ENCODE measurements at regions of chr5 and their contacts with region 1.

Region 1: DNA sequence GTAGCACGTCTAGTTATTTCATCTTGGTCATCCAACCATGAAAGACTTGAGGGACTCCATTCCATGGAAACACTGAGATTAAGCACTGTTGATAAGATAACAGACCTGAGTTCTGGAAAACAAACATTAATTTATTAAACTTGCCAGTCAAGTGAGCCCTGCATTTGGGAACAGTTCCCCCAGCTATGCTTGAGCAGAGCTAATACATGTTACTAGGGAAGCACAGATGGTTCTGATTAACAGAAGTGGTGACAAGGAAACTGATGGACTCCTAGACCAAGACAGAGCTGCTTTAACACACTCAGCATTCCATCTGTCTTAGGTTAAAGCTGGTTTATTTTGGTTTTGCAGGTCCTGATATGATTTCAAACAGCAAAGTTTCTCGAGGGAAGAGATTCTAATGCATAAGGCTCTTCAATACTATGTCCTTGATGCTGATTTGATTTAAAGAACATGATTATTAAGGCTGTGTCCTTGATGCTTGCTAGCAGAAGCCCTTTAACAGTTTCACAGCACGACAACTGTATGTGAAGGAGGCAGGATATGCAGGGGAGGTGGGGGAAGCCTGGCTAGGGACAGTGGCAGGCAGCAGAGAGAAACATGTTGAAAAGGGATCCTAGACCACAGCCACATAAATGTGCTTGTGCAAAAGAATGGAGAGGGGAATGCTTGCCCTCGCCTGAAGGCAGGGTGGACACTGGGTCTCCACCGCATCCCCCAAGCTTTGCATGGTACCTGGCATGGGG is 66.2 kb downstream of the ACTBL2 start:
- DNase-seq: no peak
- H3K4me3 Mint-ChIP-seq: no peak overlapping the region
- H3K27ac Mint-ChIP-seq: no peak overlapping the region
- H3K4me1 Mint-ChIP-seq: no peaks in the 10 kb centered on the region
- H3K27me3 Mint-ChIP-seq: peaks cover 8% of the 10 kb centered on the region

Region 2: GRCh38 chr5:57094753-57095683 is 321.4 kb before region 1 on chr5:
- intact Hi-C with region 1: no loop called
- DNase-seq: no peak
- H3K4me3 Mint-ChIP-seq: no peak overlapping the region
- H3K27ac Mint-ChIP-seq: no peak overlapping the region
- H3K4me1 Mint-ChIP-seq: no peaks in the 10 kb centered on the region
- H3K27me3 Mint-ChIP-seq: peaks cover 12% of the 10 kb centered on the region

Region 3: GRCh38 chr5:57394421-57395210 is 21.8 kb before region 1 on chr5:
- intact Hi-C with region 1: loop called (anchors 2 kb)
- DNase-seq: no peak
- H3K4me3 Mint-ChIP-seq: no peak overlapping the region
- H3K27ac Mint-ChIP-seq: no peak overlapping the region
- H3K4me1 Mint-ChIP-seq: no peaks in the 10 kb centered on the region
- H3K27me3 Mint-ChIP-seq: peaks cover 9% of the 10 kb centered on the region